ENCODE measurements at regions of chr2 and their contacts with region 1.

Region 1: DNA sequence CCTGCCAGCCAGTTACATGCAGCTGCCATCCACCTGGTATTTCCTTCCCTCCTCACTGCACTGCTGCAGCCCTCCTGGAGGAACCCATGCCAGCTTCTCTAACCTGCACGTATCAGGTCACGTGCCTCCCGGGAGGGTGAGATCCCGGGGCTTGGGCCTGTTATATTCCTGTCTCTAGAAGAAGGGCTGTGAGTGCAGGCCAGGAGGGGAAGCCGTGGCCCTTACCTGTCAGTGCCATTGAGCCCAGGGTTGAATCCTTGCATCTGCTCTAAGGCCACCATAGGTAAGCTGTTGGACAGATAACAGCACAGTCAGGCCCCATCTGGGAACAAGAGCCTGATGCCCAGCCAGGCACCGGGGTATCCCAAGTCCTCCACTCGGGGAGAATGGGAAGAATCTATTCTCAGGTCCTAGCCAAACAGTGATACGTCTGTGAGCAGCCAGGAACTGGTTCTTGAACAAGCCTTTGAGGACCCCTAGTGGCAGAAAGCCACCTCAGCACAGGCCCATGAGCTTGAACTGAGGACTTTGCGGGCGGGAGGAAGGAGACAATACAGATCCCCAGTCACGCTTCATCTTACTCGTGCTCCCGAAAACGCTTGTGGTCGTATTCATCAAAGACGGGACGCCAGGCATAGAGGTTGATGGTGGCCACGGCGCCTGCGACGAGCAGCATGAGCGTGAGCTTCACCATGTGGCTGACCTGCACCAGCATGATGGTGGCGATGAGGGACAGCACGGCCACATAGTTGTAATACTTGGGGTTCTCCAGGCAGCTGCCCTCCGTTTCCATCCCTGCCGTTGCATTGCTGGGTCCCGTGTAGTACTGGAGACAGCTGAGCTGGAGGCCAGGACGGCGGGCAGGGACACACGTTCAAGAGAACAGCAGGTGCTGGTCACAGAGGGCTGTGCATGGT is 34.4 kb downstream of the CENPO start:
- DNase-seq: peak; percentile 79 to 89 (median 82)
- H3K4me3 ChIP-seq: no peak overlapping the region
- H3K27ac ChIP-seq: no peak overlapping the region
- H3K4me1 ChIP-seq: peaks cover 0 to 6% (median under 1%) of the 10 kb centered on the region in 4 experiments
- H3K27me3 ChIP-seq: no peaks in the 10 kb centered on the region

Region 2: GRCh38 chr2:24409700-24410556 is 417.7 kb before region 1 on chr2:
- CTCF ChIA-PET with region 1: interaction called, 92 read pairs
- POLR2A ChIA-PET with region 1: interaction called, 3 read pairs
- DNase-seq: peak; percentile 60 to 78 (median 71)
- H3K4me3 ChIP-seq: no peak overlapping the region
- H3K27ac ChIP-seq: no peak overlapping the region
- H3K4me1 ChIP-seq: no peaks in the 10 kb centered on the region
- H3K27me3 ChIP-seq: no peaks in the 10 kb centered on the region

Region 3: GRCh38 chr2:24779116-24779515 is 48.5 kb before region 1 on chr2:
- CTCF ChIA-PET with region 1: no interaction called
- POLR2A ChIA-PET with region 1: no interaction called
- DNase-seq: no peak
- H3K4me3 ChIP-seq: no peak overlapping the region
- H3K27ac ChIP-seq: no peak overlapping the region
- H3K4me1 ChIP-seq: peaks cover 0 to 9% (median 8%) of the 10 kb centered on the region in 4 experiments
- H3K27me3 ChIP-seq: peaks cover 0 to 18% (median 7%) of the 10 kb centered on the region in 5 experiments

Region 4: GRCh38 chr2:24816884-24817283 is 10.7 kb before region 1 on chr2:
- CTCF ChIA-PET with region 1: interaction called, 17 read pairs
- POLR2A ChIA-PET with region 1: no interaction called
- DNase-seq: no peak
- H3K4me3 ChIP-seq: no peak overlapping the region
- H3K27ac ChIP-seq: peak overlapping the region in 1 of 2 experiments; percentile 58
- H3K4me1 ChIP-seq: peaks cover 0 to 4% (median 3%) of the 10 kb centered on the region in 4 experiments
- H3K27me3 ChIP-seq: no peaks in the 10 kb centered on the region

Measured in common myeloid progenitor, CD34-positive (primary cell).